ENCODE measurements at regions of chr16 and their contacts with region 1.

Region 1: GRCh38 chr16:78364556-78364880 is 265.1 kb downstream of the WWOX start:
- DNase-seq: no peak
- ATAC-seq: peak in 1 of 4 donors; percentile 60
- H3K4me3 ChIP-seq: no peak overlapping the region
- H3K27ac ChIP-seq: no peak overlapping the region
- H3K4me1 ChIP-seq: no peaks in the 10 kb centered on the region
- H3K27me3 ChIP-seq: no peaks in the 10 kb centered on the region
- CTCF ChIP-seq: no peak

Region 2: GRCh38 chr16:77905459-77905858 is 459.1 kb before region 1 on chr16:
- intact Hi-C with region 1: no loop called
- DNase-seq: no peak
- ATAC-seq: peak in 2 of 4 donors; percentile 48 to 85
- H3K4me3 ChIP-seq: no peak overlapping the region
- H3K27ac ChIP-seq: no peak overlapping the region
- H3K4me1 ChIP-seq: no peaks in the 10 kb centered on the region
- H3K27me3 ChIP-seq: no peaks in the 10 kb centered on the region
- CTCF ChIP-seq: no peak

Region 3: DNA sequence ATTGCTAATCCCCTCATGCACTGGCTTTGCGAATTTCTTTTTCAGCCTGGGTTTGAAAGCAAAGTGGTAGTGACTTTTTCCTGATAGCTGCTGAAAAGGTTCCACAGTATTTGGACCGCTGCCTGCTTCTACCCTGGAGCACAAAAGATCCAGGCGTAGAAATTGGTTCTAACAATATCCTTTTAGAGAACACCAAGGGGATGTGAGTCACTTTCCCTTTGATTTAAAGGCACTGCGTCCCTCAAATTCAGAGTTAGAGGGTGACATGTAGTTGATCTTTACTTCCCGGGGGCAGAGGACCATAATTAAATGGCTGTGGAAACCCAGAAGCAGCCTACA is 46.6 kb before region 1 on chr16:
- intact Hi-C with region 1: loop called in 1 of 3 experiments (anchors 5 kb)
- DNase-seq: no peak
- ATAC-seq: no peak
- H3K4me3 ChIP-seq: no peak overlapping the region
- H3K27ac ChIP-seq: no peak overlapping the region
- H3K4me1 ChIP-seq: no peaks in the 10 kb centered on the region
- H3K27me3 ChIP-seq: no peaks in the 10 kb centered on the region
- CTCF ChIP-seq: no peak